Panc1 (cell line): ENCODE measurements at regions of chr19 and their contacts with region 1.

Region 1: DNA sequence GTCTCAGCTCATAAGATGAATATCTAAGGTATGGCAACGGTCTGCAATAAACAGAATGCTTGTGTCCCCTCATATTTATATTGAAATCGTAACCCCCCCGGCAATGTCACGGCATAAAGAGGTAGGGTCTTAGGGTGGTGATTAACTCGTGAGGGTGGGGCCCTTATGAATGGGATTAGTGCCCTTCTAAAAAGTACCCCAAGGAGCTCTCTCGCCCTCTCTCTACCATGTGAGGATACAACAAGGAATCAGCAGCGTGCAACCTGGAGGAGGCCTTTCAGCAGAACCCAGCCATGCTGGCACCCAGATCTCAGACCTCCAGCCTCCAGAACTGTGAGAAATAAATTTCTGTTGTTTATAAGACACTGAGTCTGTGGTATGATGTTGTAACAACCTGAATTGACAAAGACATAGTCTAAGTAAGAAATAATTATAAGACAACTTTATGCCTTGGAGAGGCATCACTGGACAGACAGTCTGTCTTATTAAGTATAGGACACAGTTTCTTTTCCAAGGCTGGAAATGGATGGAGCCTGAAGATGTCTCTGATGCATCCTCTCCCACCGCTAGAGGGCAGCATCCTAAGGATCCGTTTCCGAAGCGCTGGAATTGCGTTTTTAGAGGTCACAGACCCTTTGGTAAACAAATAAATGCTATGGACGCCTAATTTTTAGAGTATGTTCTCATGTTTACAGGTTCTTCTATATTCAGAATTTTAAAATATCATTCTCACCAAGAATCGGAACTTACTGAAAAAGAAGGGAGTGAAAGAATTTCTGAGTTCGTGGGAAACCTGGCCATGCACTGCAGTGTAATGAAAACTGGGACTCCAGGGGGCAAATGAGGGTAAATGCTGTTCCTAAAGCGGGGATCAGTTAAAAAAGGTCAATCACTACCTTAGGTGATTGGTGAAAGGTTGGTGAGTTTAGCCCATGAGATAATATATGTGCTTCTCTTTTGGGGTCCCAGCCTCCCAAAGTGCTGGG is 13.3 kb upstream of the LEUTX start:
- DNase-seq: peak; percentile 89
- ATAC-seq: peak; percentile 76
- H3K4me3 ChIP-seq: no peak overlapping the region
- H3K27ac ChIP-seq: no peak overlapping the region
- H3K4me1 ChIP-seq: no peaks in the 10 kb centered on the region
- H3K27me3 ChIP-seq: peaks cover 42% of the 10 kb centered on the region
- CTCF ChIP-seq: no peak

Region 2: DNA sequence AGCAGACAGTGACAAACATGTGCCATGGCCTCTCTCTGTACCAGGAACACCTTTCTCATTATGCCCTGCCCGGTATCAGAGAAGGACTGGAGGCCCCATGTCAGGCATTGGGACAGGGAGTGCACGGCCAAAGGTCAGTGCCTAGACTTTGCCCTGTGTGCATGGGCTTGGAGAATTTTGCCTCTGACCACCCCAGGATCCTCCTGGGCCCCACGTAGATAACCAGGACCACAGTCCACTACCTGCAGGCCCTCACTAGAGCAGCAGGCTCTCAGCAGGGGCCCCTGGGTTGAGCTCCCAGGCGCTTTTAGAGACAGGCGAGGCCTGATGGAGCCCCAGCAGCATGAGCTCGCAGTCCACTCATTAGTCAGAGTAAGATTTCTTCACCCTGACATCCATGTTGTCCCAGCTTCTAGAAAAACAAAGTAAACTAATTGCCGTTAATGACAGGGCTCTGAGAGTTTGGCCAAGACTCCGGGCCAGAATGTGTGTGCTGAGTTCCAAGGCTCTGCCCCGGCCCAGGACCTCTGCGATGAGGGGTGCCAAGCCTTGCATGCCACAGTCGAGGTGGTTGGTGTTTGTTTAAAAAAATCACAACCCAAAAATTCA is 1063.8 kb before region 1 on chr19:
- CTCF ChIA-PET with region 1: no interaction called
- POLR2A ChIA-PET with region 1: interaction called, 16 read pairs
- in situ Hi-C with region 1: no loop called
- intact Hi-C with region 1: no loop called
- DNase-seq: no peak
- ATAC-seq: peak; percentile 4; the same call in 1 of the 2 replicates
- H3K4me3 ChIP-seq: no peak overlapping the region
- H3K27ac ChIP-seq: peak overlapping the region; percentile 98
- H3K4me1 ChIP-seq: peaks cover 88% of the 10 kb centered on the region
- H3K27me3 ChIP-seq: no peaks in the 10 kb centered on the region
- CTCF ChIP-seq: no peak

Region 3: GRCh38 chr19:39514840-39515550 is 250.4 kb before region 1 on chr19 and contains the start of gene SELENOV:
- CTCF ChIA-PET with region 1: interaction called, 13 read pairs
- POLR2A ChIA-PET with region 1: no interaction called
- in situ Hi-C with region 1: no loop called
- intact Hi-C with region 1: no loop called
- DNase-seq: no peak
- ATAC-seq: peak; percentile 56
- H3K4me3 ChIP-seq: peak within 1 kb of the TSS; percentile 30 to 55
- H3K27ac ChIP-seq: peak within 1 kb of the TSS; percentile 5
- H3K4me1 ChIP-seq: peaks cover 26% of the 10 kb centered on the region
- H3K27me3 ChIP-seq: peaks cover 23% of the 10 kb centered on the region
- CTCF ChIP-seq: no peak
- total RNA-seq, gene SELENOV: 0.80 TPM

Region 4: DNA sequence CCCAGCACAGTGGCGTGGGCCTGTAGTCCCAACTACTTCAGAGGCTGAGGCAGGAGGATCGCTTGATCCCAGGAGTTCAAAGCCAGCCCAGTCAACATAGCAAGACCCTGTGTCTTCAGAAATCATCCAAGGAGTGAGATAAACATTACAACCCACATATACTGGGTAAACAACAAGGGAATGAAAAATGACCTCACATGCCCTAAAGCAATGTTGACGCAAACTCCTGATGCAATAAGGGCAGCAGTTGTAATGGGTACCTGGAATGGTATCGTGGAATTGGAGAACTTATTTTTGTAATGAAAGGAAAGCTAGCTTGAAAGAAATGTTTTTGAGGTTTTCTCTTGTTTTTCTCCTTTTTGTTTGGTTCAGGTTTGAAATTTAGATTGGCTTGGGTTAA is 134.2 kb before region 1 on chr19:
- CTCF ChIA-PET with region 1: interaction called, 15 read pairs
- POLR2A ChIA-PET with region 1: interaction called, 7 read pairs
- in situ Hi-C with region 1: no loop called
- intact Hi-C with region 1: no loop called
- DNase-seq: peak; percentile 56
- ATAC-seq: peak; percentile 47
- H3K4me3 ChIP-seq: no peak overlapping the region
- H3K27ac ChIP-seq: no peak overlapping the region
- H3K4me1 ChIP-seq: no peaks in the 10 kb centered on the region
- H3K27me3 ChIP-seq: peaks cover 60% of the 10 kb centered on the region
- CTCF ChIP-seq: no peak; the same call in 1 of the 2 replicates

Region 5: GRCh38 chr19:39778763-39779162 is 13.4 kb after region 1 on chr19 and contains the start of gene LEUTX:
- CTCF ChIA-PET with region 1: interaction called, 188 read pairs
- POLR2A ChIA-PET with region 1: interaction called, 7 read pairs
- in situ Hi-C with region 1: no loop called
- intact Hi-C with region 1: no loop called
- DNase-seq: no peak
- ATAC-seq: no peak
- H3K4me3 ChIP-seq: no peak within 1 kb of the TSS
- H3K27ac ChIP-seq: no peak within 1 kb of the TSS
- H3K4me1 ChIP-seq: no peaks in the 10 kb centered on the region
- H3K27me3 ChIP-seq: peaks cover 86% of the 10 kb centered on the region
- CTCF ChIP-seq: no peak
- total RNA-seq, gene LEUTX: not detected

Region 6: GRCh38 chr19:39833464-39834286 is 68.3 kb after region 1 on chr19 and contains the start of gene DYRK1B:
- CTCF ChIA-PET with region 1: interaction called, 42 read pairs
- POLR2A ChIA-PET with region 1: interaction called, 5 read pairs
- in situ Hi-C with region 1: no loop called
- intact Hi-C with region 1: no loop called
- DNase-seq: peak; percentile 100
- ATAC-seq: peak; percentile 94
- H3K4me3 ChIP-seq: peak within 1 kb of the TSS; percentile 36 to 57
- H3K27ac ChIP-seq: peak within 1 kb of the TSS; percentile 76
- H3K4me1 ChIP-seq: peaks cover 26% of the 10 kb centered on the region
- H3K27me3 ChIP-seq: no peaks in the 10 kb centered on the region
- CTCF ChIP-seq: no peak
- total RNA-seq, gene DYRK1B: 322 TPM

Region 7: GRCh38 chr19:40184273-40184672 is 418.9 kb after region 1 on chr19:
- CTCF ChIA-PET with region 1: interaction called, 12 read pairs
- POLR2A ChIA-PET with region 1: interaction called, 8 read pairs
- in situ Hi-C with region 1: no loop called
- intact Hi-C with region 1: no loop called
- DNase-seq: no peak
- ATAC-seq: no peak
- H3K4me3 ChIP-seq: no peak overlapping the region
- H3K27ac ChIP-seq: no peak overlapping the region
- H3K4me1 ChIP-seq: no peaks in the 10 kb centered on the region
- H3K27me3 ChIP-seq: peaks cover 17% of the 10 kb centered on the region
- CTCF ChIP-seq: no peak